ENCODE measurements at regions of chr11 and their contacts with region 1.

Region 1: DNA sequence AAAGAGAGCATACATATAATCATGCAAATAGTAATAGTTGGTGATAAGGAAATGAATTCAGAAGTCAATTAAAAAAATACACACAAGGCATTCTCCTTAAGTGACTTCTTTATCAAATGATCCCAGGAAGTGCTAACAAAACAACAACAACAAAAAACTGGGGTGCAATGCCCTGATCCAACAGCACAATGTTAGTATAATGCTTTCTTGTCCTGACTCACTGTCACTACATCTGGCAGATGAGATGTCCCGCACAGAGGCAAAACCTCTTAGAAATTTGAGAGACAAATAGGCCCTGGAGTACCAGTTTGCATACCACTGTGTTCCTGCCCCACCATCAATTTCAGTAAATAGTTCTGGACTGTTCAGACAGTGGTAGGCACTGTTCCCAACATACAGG is 11.0 kb upstream of the AMBRA1 start:
- DNase-seq: no peak
- H3K4me3 ChIP-seq: no peak overlapping the region
- H3K27ac ChIP-seq: no peak overlapping the region
- H3K4me1 ChIP-seq: peaks cover 0 to 5% of the 10 kb centered on the region in 2 experiments; a peak in 1 of 4 replicates
- H3K27me3 ChIP-seq: no peaks in the 10 kb centered on the region
- CTCF ChIP-seq: no peak
- EP300 ChIP-seq: no peak
- RAD21 ChIP-seq: no peak

Region 2: GRCh38 chr11:46588131-46588530 is 16.7 kb before region 1 on chr11:
- CTCF ChIA-PET with region 1: no interaction called
- POLR2A ChIA-PET with region 1: no interaction called
- DNase-seq: no peak
- H3K4me3 ChIP-seq: no peak overlapping the region
- H3K27ac ChIP-seq: no peak overlapping the region
- H3K4me1 ChIP-seq: peaks cover 3 to 26% of the 10 kb centered on the region in 2 experiments; a peak in 2 of 4 replicates
- H3K27me3 ChIP-seq: no peaks in the 10 kb centered on the region
- CTCF ChIP-seq: no peak
- EP300 ChIP-seq: no peak
- RAD21 ChIP-seq: no peak

Region 3: GRCh38 chr11:46616998-46617675 is 12.3 kb after region 1 on chr11 and contains the starts of genes ATG13 and HARBI1:
- CTCF ChIA-PET with region 1: interaction called, 18 read pairs
- POLR2A ChIA-PET with region 1: no interaction called
- DNase-seq: peak; percentile 94
- H3K4me3 ChIP-seq: peak within 1 kb of the TSS; percentile 88 to 100
- H3K27ac ChIP-seq: peak within 1 kb of the TSS; percentile 93 to 94
- H3K4me1 ChIP-seq: peaks cover 6 to 15% of the 10 kb centered on the region in 2 experiments; a peak in 3 of 4 replicates
- H3K27me3 ChIP-seq: no peaks in the 10 kb centered on the region
- CTCF ChIP-seq: no peak
- EP300 ChIP-seq: peak; percentile 61 to 91; a peak in 3 of 4 replicates
- RAD21 ChIP-seq: no peak
- polyA plus RNA-seq, gene ATG13: 39.4 and 52.8 TPM in 2 replicates
- polyA plus RNA-seq, gene HARBI1: 2.4 and 3.3 TPM in 2 replicates